ENCODE measurements at regions of chr2 and their contacts with region 1.

Region 1: GRCh38 chr2:201231781-201232466 is 28.4 kb upstream of the CASP8 start:
- DNase-seq: peak; percentile 88
- H3K4me3 Mint-ChIP-seq: peak overlapping the region; percentile 93
- H3K27ac Mint-ChIP-seq: peak overlapping the region; percentile 87
- H3K4me1 Mint-ChIP-seq: peaks cover 57% of the 10 kb centered on the region
- H3K27me3 Mint-ChIP-seq: no peaks in the 10 kb centered on the region

Region 2: DNA sequence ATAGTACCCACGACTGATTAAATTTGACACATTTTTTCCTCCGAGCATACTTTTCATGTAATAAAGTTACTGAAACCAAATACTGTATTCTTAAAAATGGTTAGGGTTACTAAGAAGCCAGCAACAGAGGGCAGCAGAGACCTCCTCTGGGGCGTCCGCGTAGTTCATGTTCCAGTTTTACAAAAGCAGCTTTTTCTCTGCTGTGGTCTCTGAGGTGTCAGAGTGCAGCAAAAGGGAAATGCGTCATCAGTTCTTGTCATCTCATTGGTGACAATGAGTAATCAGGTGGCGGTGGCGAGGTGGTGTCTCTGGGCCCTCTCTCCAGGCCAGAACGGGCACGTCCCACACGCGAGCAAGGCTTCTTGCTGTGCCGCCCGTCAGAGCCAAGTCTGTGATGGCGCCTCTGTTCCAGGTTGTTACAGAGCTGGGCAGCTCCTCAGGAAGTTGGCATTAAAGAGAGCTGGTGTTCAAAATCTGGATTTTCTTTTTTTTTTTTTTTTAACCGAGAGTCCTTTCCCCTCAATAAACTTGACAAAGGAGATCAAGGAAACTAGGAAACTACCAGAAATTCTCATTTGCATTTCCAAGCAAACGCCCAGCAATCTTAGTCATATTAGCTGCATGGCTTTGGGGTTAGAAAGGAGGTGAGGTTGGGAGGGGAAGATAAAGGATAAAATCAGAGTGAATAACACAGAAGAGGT is 518.8 kb before region 1 on chr2:
- intact Hi-C with region 1: loop called (anchors 1 kb)
- DNase-seq: peak; percentile 89
- H3K4me3 Mint-ChIP-seq: peak overlapping the region; percentile 79
- H3K27ac Mint-ChIP-seq: peak overlapping the region; percentile 99
- H3K4me1 Mint-ChIP-seq: peaks cover 44% of the 10 kb centered on the region
- H3K27me3 Mint-ChIP-seq: no peaks in the 10 kb centered on the region

Region 3: DNA sequence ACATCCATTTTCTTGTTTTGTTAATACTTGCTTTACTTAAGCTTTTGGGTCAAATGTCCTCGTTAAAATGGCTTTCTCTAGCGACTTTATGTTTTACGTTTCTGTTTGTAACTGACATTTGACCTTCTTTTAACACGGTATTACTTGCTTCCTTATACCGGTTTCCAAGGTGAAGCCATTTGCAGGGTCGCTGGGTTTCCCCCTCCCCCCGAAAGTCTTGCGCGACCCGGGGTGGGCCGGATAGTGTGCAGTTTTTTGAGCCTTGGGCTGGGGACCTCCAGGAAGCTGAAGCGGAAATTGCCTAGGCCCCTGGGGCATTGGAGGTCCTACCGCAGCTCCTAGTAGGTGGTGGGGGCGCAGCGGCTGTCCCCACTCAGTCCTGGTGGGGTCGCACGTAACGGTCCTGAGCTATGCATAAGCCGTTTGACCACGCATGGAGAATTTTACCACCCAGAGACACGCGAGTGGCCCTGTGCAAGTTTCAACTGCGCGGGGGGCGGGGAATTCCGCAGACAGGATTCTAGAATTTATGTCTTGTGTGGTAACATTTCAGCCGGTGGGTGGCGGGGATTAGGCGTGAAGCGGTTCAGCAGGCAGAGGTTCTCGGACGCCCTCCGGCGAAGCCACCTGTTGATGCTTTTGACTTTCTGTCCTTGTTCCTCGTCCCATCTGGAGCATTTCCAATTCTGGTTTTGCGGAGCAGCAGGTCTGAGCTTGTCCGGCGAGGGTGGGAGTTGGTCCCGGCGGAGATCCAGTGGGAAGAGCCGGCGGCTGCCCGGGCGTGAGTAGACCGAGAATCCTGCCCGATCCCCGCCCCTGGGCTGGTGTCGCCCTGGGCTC is 113.6 kb before region 1 on chr2:
- intact Hi-C with region 1: loop called (anchors 1 kb)
- DNase-seq: peak; percentile 78
- H3K4me3 Mint-ChIP-seq: peak overlapping the region; percentile 94
- H3K27ac Mint-ChIP-seq: peak overlapping the region; percentile 100
- H3K4me1 Mint-ChIP-seq: peaks cover 65% of the 10 kb centered on the region
- H3K27me3 Mint-ChIP-seq: no peaks in the 10 kb centered on the region

Region 4: GRCh38 chr2:201208563-201209252 is 23.2 kb before region 1 on chr2:
- intact Hi-C with region 1: loop called (anchors 1 kb)
- DNase-seq: no peak
- H3K4me3 Mint-ChIP-seq: no peak overlapping the region
- H3K27ac Mint-ChIP-seq: no peak overlapping the region
- H3K4me1 Mint-ChIP-seq: peaks cover 8% of the 10 kb centered on the region
- H3K27me3 Mint-ChIP-seq: no peaks in the 10 kb centered on the region

Region 5: GRCh38 chr2:201285499-201285898 is 53.6 kb after region 1 on chr2:
- intact Hi-C with region 1: no loop called
- DNase-seq: no peak
- H3K4me3 Mint-ChIP-seq: no peak overlapping the region
- H3K27ac Mint-ChIP-seq: no peak overlapping the region
- H3K4me1 Mint-ChIP-seq: peaks cover 17% of the 10 kb centered on the region
- H3K27me3 Mint-ChIP-seq: no peaks in the 10 kb centered on the region

Region 6: DNA sequence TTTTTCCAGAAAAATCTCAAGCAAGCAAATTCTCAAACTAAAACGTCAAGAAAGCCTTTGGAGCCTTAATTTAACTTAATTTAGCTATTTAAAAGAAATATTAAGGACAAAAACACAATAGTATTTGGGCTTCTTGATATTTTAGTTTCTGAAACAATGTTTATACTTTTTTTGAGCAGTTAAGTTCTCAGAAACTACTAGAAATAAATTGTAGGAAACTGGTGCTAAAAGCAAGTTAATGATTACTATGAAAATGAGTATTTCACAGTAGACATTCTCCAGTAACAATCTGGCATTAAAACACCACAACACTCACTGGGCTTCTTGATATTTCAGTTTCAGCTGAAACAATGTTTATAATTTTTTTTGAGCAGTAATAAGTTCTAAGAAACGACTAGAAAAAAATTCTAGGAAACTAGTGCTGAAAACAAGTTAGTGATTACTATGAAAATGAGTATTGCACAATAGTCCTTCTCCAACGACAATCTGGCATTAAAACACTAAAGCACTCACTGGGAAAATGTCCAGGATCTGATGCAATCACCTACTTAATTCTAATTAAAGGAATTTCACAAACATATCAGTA is 174.2 kb after region 1 on chr2:
- intact Hi-C with region 1: loop called (anchors 5 kb)
- DNase-seq: no peak
- H3K4me3 Mint-ChIP-seq: no peak overlapping the region
- H3K27ac Mint-ChIP-seq: no peak overlapping the region
- H3K4me1 Mint-ChIP-seq: peaks cover 41% of the 10 kb centered on the region
- H3K27me3 Mint-ChIP-seq: no peaks in the 10 kb centered on the region

Region 7: DNA sequence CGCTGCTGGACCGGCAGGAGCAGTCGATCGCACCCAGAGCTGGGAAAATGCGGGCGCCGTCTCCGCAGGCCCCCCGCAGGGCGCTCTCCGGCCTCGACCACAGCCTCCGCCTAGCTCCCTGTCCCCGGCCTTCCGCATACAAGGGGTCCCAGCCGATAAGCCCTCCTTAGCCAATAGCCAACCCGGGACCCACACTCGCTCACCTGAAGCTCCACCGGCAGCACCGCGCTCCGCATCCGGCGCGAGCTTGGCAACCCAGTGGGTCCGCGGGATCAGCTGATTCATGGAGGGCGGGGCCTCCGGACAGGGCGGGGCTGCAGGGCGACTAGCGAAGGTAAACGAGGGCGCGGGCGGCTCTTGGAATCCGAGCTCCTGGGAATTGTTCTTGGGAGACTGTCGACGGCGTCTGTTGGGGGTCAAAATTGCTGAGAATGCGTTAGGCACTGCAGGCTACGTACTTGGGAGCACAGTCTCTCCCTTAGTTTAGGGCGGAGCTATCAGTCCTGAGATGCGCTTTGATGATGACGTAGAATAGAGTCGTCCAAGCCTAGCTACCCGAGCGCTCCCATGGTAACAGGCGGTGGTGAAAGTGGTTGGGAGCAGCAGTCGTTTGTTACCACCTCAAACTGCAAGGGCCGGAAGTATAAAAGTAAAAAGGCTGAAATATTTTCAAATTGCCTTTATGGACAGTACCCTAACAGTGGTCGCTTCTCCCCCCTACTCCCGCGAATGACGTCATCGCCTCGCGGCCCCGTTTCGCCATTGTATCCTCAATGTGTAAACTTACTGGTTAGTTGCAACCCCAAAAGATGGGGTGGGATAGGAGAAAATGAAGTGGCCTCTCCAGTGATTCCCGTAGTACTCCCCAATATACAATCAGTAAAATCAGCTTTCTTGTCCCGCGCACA is 549.0 kb after region 1 on chr2 and contains the start of gene ALS2:
- intact Hi-C with region 1: loop called (anchors 2 kb)
- DNase-seq: peak; percentile 92
- H3K4me3 Mint-ChIP-seq: peak within 1 kb of the TSS; percentile 95
- H3K27ac Mint-ChIP-seq: peak within 1 kb of the TSS; percentile 92
- H3K4me1 Mint-ChIP-seq: peaks cover 31% of the 10 kb centered on the region
- H3K27me3 Mint-ChIP-seq: peaks cover 24% of the 10 kb centered on the region
- total RNA-seq, gene ALS2: 11.7 and 12.7 TPM in 2 replicates

Measured in activated T-helper 1 cell treated with anti-CD3 and anti-CD28 coated beads, Interleukin-12 subunit alpha, Interleukin-12 subunit beta, Interleukin-2, Interleukin-4 antibody, amounts not matched to agents 30 ng/mL and 10 ng/mL and 1 ng/mL, durations not matched to agents 14 hours and 24 hours and 36 hours (primary cell).